ENCODE measurements at regions of chr2 and their contacts with region 1.

Region 1: GRCh38 chr2:32039447-32040219 is at the start of gene DPY30:
- DNase-seq: peak; percentile 92

Region 2: GRCh38 chr2:31997653-31998052 is 42.0 kb before region 1 on chr2:
- CTCF ChIA-PET with region 1: no interaction called
- POLR2A ChIA-PET with region 1: no interaction called
- DNase-seq: no peak

Region 3: DNA sequence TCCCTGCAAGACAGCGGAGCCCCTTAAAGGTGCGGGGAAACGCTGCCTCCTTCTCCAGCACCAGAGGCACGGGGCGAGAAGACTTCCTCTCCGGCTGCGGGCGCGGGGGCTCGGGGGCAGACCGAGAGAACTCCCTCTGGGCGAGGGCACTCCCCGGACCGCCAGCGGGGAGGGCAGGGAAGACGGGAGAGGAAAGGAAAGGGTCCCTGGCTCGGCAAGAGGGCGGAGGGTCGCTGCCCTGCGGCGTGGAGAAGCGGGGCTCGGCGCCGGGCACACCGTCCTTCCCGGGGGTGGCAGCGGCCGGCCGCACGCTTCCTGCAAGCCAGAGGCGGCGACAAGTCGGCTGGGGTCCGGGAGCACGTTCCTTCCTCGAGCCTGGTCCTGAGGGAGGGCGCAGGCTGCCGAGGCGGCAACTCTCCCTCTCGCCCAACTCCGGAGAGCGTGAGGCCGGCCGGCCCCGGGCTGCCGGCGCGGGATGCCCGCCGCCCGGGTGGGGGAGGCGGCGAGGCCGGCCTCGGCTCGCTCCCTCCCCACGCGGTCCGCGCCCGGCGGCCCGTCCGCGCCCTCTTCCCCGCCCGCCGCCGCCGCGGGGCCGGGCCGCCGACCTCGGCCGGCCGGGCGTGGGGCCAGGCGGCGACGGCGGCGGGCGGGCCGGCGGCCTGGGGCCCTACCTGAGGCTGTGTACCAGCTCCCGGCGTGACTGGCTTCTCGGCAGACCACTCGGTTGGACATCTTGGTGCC is 29.9 kb before region 1 on chr2:
- CTCF ChIA-PET with region 1: no interaction called
- POLR2A ChIA-PET with region 1: interaction called, 16 read pairs
- DNase-seq: peak; percentile 38

Region 4: DNA sequence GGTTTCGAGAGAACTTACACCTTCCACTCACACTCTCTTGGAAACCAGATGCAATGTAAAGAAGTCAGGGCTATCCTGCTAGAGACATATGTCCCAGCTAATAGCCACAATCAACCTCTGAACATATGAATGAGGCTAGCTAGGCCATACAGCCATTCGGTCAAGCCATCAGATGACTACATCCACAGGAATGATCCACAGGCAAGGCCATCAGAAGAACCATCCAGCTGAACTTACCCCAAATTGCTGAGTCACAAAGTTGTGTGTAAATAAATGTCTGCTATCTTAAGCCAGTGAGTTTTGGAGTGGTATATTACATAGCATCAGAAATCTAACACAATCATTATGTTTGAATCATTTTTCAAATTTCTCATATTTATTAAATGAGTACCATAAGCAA is 18.5 kb after region 1 on chr2:
- CTCF ChIA-PET with region 1: no interaction called
- POLR2A ChIA-PET with region 1: interaction called, 110 read pairs
- DNase-seq: no peak

Region 5: GRCh38 chr2:32063310-32064161 is 23.9 kb after region 1 on chr2 and contains the start of gene SPAST:
- CTCF ChIA-PET with region 1: no interaction called
- POLR2A ChIA-PET with region 1: interaction called, 110 read pairs
- DNase-seq: peak; percentile 95

Region 6: DNA sequence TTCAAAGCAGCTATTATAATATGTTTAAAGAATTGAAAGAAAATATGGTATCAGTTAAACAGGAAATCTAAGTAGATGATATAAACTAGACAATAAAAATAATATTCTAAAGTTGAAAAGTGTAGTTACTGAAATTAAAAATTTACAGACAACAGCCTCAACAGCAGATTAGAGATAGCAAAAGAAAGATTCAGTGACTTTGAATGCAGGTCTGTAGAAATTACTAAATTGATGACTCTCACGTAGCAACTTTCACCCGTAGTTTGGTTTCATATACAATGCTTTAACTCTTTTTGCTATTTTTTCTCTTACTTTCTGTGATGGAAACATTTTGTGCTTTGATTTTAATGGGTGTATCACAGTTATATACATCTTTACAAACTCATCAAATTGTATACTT is 68.5 kb after region 1 on chr2:
- CTCF ChIA-PET with region 1: no interaction called
- POLR2A ChIA-PET with region 1: no interaction called
- DNase-seq: no peak

Region 7: GRCh38 chr2:32166115-32166574 is 126.5 kb after region 1 on chr2:
- CTCF ChIA-PET with region 1: no interaction called
- POLR2A ChIA-PET with region 1: interaction called, 28 read pairs
- DNase-seq: no peak

Region 8: GRCh38 chr2:32342801-32343200 is 303.2 kb after region 1 on chr2:
- CTCF ChIA-PET with region 1: no interaction called
- POLR2A ChIA-PET with region 1: no interaction called
- DNase-seq: no peak